ENCODE measurements at regions of chr4 and their contacts with region 1.

Region 1: GRCh38 chr4:154720123-154720522 is 23.7 kb upstream of the LRAT start:
- DNase-seq: peak; percentile 98
- H3K4me3 ChIP-seq: no peak overlapping the region
- H3K27ac ChIP-seq: peak overlapping the region; percentile 100
- H3K4me1 ChIP-seq: peaks cover 47% of the 10 kb centered on the region
- H3K27me3 ChIP-seq: no peaks in the 10 kb centered on the region
- CTCF ChIP-seq: no peak

Region 2: GRCh38 chr4:154626793-154627484 is 93.2 kb before region 1 on chr4:
- CTCF ChIA-PET with region 1: no interaction called
- dilution Hi-C with region 1: no loop called
- in situ Hi-C with region 1: no loop called
- intact Hi-C with region 1: loop called (anchors 1 kb)
- DNase-seq: peak; percentile 65
- H3K4me3 ChIP-seq: peak overlapping the region; percentile 27 to 51 (median 48)
- H3K27ac ChIP-seq: no peak overlapping the region
- H3K4me1 ChIP-seq: peaks cover 17% of the 10 kb centered on the region
- H3K27me3 ChIP-seq: no peaks in the 10 kb centered on the region
- CTCF ChIP-seq: peak; percentile 60 to 85

Region 3: GRCh38 chr4:154707877-154708276 is 12.2 kb before region 1 on chr4:
- CTCF ChIA-PET with region 1: no interaction called
- dilution Hi-C with region 1: no loop called
- in situ Hi-C with region 1: no loop called
- intact Hi-C with region 1: loop called (anchors 1 kb)
- DNase-seq: peak; percentile 100
- H3K4me3 ChIP-seq: no peak overlapping the region
- H3K27ac ChIP-seq: peak overlapping the region; percentile 100
- H3K4me1 ChIP-seq: peaks cover 31% of the 10 kb centered on the region
- H3K27me3 ChIP-seq: no peaks in the 10 kb centered on the region
- CTCF ChIP-seq: no peak

Region 4: DNA sequence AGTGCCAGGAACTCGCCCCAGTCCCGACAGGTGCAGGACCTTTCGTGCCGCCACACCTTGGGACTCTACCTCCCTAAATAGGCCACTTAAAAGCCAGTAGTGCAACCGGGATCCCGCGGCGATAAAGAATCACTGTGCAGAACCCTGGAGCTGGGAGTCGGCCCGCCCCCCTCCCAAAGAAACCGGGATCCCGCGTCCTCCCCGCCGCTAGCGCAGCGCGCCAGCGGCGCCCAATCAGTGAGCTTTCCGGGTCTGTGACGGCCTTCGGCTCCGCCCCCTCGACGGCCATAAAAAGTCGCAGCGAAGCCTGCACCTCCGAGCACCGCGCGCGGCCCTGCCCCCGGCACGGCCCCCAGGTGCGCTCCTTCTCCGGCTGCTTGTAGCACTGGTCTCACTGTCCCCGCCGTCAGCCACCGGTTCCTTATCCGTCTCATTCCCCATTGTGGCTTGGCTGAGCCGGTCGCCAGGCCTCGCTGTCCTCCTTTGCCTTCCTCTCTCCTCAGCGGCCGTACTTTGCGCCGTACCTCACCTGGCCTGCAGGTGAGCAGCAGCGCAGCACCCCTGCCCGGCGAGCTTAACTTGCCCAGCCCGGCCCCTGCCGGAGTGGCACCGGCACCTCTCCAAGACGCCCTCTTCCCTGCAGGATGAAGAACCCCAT is 23.7 kb after region 1 on chr4 and contains the start of gene LRAT:
- CTCF ChIA-PET with region 1: no interaction called
- dilution Hi-C with region 1: no loop called
- in situ Hi-C with region 1: no loop called
- intact Hi-C with region 1: loop called (anchors 1 kb)
- DNase-seq: peak; percentile 89
- H3K4me3 ChIP-seq: peak within 1 kb of the TSS; percentile 63 to 76 (median 74)
- H3K27ac ChIP-seq: peak within 1 kb of the TSS; percentile 60
- H3K4me1 ChIP-seq: peaks cover 15% of the 10 kb centered on the region
- H3K27me3 ChIP-seq: no peaks in the 10 kb centered on the region
- CTCF ChIP-seq: peak; percentile 36 to 66
- total RNA-seq, gene LRAT: 16.6 to 22.2 TPM

Region 5: GRCh38 chr4:154877110-154877760 is 157.1 kb after region 1 on chr4:
- CTCF ChIA-PET with region 1: no interaction called
- dilution Hi-C with region 1: no loop called
- in situ Hi-C with region 1: no loop called
- intact Hi-C with region 1: no loop called
- DNase-seq: peak; percentile 47
- H3K4me3 ChIP-seq: no peak overlapping the region
- H3K27ac ChIP-seq: no peak overlapping the region
- H3K4me1 ChIP-seq: no peaks in the 10 kb centered on the region
- H3K27me3 ChIP-seq: no peaks in the 10 kb centered on the region
- CTCF ChIP-seq: no peak

Measured in mammary epithelial cell (primary cell).